PC-3 (cell line): ENCODE measurements at regions of chr1 and their contacts with region 1.

Region 1: DNA sequence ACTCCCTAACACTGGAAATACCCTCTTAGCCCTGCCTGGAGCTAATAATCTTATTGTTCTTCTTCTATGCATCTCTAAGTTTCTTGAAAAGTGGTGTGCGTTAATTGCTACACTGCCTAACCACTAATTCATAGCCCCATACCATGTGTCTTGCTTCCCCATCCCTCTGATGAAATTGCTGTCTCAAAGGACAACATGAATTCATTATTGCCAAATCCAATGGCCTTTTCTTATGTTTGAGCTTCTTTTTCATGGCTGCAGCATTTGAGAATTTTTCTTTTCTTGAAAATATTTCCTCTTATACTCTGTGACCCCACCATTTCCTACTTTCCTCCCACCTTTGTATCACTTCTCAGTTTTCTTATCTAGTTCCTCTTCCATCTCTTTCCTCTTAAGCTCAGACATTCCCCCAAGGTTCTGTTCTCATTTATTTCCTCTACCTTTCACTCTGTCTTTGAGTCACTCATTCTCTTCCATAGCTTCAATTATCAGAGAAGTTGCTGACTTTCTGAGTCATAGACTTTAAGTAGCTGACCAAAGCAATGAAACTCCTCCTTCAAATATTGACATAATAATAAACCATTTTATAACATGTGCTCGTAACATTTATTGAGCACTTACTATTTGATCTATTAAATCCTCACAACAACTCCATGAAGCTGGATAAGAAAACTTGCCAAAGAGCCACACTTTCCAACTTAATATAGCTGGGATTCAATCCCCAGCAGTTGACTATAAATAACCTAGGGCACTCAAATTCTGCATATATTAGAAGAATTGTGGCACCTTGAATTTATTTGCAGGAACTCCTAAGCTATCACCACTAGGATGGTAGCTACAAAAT is 35.5 kb upstream of the ATP6V1G3 start:
- DNase-seq: peak; percentile 79
- ATAC-seq: peak; percentile 76
- H3K4me3 ChIP-seq: no peak overlapping the region
- H3K27ac ChIP-seq: peak overlapping the region; percentile 69
- H3K4me1 ChIP-seq: peaks cover 22% of the 10 kb centered on the region
- H3K27me3 ChIP-seq: no peaks in the 10 kb centered on the region
- CTCF ChIP-seq: no peak

Region 2: DNA sequence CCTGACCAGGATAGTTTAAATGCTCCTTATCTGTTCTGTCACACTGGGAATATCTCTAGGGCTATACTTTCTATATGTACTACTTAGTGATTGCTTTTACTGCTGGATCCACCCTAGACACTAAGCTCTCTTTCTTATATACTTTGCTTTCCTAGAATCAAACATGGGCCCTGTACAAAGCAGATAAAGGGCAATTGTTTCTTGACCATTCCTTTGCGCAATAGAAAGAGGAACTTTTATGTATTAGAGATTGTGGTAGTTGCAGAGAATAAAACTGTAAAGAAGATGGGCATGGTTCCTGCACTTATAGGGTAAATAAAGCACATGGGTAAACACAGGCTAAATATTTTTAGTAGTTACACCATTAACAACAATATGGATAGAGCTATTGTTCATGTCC is 94.4 kb before region 1 on chr1:
- CTCF ChIA-PET with region 1: no interaction called
- POLR2A ChIA-PET with region 1: no interaction called
- intact Hi-C with region 1: loop called (anchors 5 kb)
- DNase-seq: no peak
- ATAC-seq: no peak
- H3K4me3 ChIP-seq: no peak overlapping the region
- H3K27ac ChIP-seq: no peak overlapping the region
- H3K4me1 ChIP-seq: peaks cover 17% of the 10 kb centered on the region
- H3K27me3 ChIP-seq: no peaks in the 10 kb centered on the region
- CTCF ChIP-seq: no peak

Region 3: DNA sequence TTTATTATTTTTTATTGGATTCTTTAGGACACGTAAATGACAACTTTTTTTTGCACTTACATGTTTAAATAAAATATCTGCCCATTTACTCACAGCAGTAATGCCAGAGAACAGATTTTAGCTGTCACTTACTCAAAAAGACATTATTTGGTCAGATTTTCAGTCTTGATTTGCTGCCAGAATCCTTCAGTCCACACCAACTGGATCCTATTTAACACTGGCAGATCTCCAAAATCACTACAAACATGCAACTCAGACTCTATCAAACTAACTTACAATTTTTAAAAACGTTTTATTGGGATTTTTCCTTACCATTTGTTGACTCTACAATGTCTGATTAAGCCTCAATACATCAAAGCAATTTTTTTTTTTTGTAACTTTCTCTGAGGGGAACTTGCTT is 46.6 kb before region 1 on chr1:
- CTCF ChIA-PET with region 1: no interaction called
- POLR2A ChIA-PET with region 1: no interaction called
- intact Hi-C with region 1: loop called (anchors 5 kb)
- DNase-seq: peak; percentile 78
- ATAC-seq: peak; percentile 57
- H3K4me3 ChIP-seq: no peak overlapping the region
- H3K27ac ChIP-seq: peak overlapping the region; percentile 49
- H3K4me1 ChIP-seq: peaks cover 24% of the 10 kb centered on the region
- H3K27me3 ChIP-seq: no peaks in the 10 kb centered on the region
- CTCF ChIP-seq: no peak